Activated T-helper 1 cell treated with anti-CD3 and anti-CD28 coated beads, Interleukin-12 subunit alpha, Interleukin-12 subunit beta, Interleukin-2, Interleukin-4 antibody, amounts not matched to agents 30 ng/mL and 10 ng/mL and 1 ng/mL, durations not matched to agents 14 hours and 24 hours and 36 hours (primary cell): ENCODE measurements at regions of chr2 and their contacts with region 1.

Region 1: GRCh38 chr2:216195565-216196029 is 86.4 kb downstream of the XRCC5 start:
- DNase-seq: no peak
- H3K4me3 Mint-ChIP-seq: no peak overlapping the region
- H3K27ac Mint-ChIP-seq: peak overlapping the region; percentile 78
- H3K4me1 Mint-ChIP-seq: peaks cover 65% of the 10 kb centered on the region
- H3K27me3 Mint-ChIP-seq: no peaks in the 10 kb centered on the region

Region 2: DNA sequence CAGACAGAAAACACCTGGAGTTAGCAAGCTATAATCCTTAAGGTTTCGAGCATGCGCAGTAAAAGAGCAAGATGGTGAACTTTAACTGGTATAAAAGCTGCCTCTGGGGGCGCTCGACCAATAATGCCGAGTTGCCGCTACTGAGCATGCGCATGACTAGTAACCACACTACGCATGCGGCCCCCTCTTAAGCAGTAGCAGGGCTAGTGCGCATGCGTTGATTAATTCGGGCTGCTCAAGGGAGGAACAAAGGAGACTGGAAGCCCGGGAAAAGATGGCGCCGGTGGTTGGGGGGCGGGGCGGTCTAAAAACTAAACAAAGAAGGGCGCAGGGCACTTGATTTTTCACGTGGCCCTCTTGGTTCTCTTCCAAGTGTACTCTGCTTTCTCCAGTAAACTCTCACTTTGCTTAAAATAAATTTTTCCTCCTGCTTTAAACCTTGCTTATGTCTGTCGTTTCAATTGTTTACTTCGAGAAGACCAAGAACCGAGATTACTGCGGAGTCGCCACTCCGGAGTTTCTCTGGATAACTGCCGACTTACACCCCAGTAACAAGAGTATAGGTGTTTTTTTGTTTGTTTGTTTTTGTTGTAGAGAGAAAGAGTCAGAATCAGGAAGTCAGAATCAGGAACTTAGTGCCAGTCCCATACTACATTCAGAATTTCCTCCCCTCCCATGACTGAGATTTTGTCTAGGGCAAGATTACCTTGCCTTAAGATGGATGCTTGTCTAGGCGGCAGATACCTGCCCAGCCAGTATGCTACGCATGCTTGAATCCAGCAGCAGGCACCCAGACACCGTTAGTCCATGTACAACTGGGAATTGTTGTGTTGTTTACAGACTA is 80.7 kb before region 1 on chr2:
- intact Hi-C with region 1: loop called (anchors 2 kb)
- DNase-seq: peak; percentile 95
- H3K4me3 Mint-ChIP-seq: peak overlapping the region; percentile 89
- H3K27ac Mint-ChIP-seq: peak overlapping the region; percentile 88
- H3K4me1 Mint-ChIP-seq: peaks cover 94% of the 10 kb centered on the region
- H3K27me3 Mint-ChIP-seq: no peaks in the 10 kb centered on the region

Region 3: DNA sequence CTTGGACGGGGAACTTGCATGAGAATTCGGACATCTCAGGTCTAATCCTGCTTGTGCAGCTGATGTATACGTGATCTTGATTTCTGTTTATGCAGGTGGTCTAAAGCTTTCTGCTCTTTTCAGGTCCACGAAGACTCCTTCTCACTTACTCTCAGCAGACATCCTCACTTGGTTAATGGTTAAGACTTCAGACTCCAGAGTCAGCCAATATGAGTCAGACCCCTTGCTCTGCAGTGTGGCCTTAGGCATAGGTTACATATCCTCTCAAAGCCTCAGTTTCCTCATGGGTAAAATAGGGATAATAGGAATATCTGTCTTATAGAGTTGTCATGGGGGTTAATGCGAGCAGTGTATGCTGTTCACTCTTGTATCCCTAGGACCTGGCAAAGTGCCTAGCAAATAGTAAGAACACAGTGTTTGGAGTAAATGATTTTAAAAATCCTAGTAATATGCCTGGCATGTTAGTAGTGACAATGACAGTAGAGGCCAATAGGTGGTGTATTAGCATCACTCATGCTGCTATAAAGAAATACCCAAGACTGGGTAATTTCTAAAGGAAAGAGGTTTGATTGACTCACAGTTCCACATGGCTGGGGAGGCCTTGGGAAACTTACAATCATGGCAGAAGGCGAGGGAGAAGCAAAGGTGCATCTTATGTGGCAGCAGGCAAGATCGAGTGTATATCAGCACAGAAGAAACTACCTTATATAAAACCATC is 44.1 kb before region 1 on chr2:
- intact Hi-C with region 1: no loop called
- DNase-seq: no peak
- H3K4me3 Mint-ChIP-seq: no peak overlapping the region
- H3K27ac Mint-ChIP-seq: peak overlapping the region; percentile 18
- H3K4me1 Mint-ChIP-seq: peaks cover 49% of the 10 kb centered on the region
- H3K27me3 Mint-ChIP-seq: no peaks in the 10 kb centered on the region

Region 4: DNA sequence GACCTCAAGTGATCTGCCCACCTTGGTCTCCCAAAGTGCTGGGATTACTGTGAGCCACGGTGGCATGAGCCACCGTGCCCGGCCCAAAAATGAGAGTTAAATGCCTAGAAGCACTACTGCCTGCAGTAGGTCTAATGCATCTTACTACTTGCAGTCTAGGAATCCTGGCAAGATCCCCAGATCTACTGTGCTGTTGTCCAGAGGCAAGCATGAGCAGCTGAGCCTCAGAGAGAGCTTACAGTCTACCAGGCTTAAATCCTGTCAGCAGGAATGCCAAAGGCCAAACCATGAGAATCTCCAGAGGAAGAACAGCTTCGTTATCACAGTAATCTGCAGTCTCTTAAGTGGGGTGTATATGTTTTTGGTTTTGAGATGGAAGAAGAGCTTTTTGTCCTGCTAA is 32.1 kb before region 1 on chr2:
- intact Hi-C with region 1: loop called (anchors 5 kb)
- DNase-seq: no peak
- H3K4me3 Mint-ChIP-seq: no peak overlapping the region
- H3K27ac Mint-ChIP-seq: peak overlapping the region; percentile 10
- H3K4me1 Mint-ChIP-seq: peaks cover 16% of the 10 kb centered on the region
- H3K27me3 Mint-ChIP-seq: no peaks in the 10 kb centered on the region

Region 5: GRCh38 chr2:216206041-216206703 is 10.6 kb after region 1 on chr2:
- intact Hi-C with region 1: loop called (anchors 1 kb)
- DNase-seq: no peak
- H3K4me3 Mint-ChIP-seq: no peak overlapping the region
- H3K27ac Mint-ChIP-seq: peak overlapping the region; percentile 87
- H3K4me1 Mint-ChIP-seq: peaks cover 79% of the 10 kb centered on the region
- H3K27me3 Mint-ChIP-seq: no peaks in the 10 kb centered on the region

Region 6: DNA sequence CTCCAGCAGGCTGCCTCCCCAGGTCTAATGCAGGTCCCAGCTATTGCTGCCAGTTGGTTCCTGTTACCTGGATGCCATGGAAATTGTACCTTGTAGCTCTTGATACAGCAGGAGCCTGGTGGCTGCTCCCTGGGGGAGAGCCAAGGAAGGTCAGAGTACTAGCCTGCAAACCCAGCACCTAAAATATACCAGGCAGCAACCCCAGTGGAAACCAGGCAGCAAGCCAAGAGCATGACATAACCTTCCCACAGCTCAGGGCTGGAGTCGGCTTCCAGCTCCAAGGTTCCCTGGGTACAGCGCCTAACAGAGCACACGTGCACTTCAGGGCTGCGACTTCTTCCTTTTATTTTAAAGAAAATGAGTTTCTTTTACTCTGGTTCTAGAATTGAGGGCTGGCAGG is 633.9 kb after region 1 on chr2:
- intact Hi-C with region 1: no loop called
- DNase-seq: no peak
- H3K4me3 Mint-ChIP-seq: no peak overlapping the region
- H3K27ac Mint-ChIP-seq: no peak overlapping the region
- H3K4me1 Mint-ChIP-seq: no peaks in the 10 kb centered on the region
- H3K27me3 Mint-ChIP-seq: peaks cover 17% of the 10 kb centered on the region